Activated naive CD4-positive, alpha-beta T cell treated with anti-CD3 and anti-CD28 coated beads for 36 hours (primary cell): ENCODE measurements at regions of chr13 and their contacts with region 1.

Region 1: DNA sequence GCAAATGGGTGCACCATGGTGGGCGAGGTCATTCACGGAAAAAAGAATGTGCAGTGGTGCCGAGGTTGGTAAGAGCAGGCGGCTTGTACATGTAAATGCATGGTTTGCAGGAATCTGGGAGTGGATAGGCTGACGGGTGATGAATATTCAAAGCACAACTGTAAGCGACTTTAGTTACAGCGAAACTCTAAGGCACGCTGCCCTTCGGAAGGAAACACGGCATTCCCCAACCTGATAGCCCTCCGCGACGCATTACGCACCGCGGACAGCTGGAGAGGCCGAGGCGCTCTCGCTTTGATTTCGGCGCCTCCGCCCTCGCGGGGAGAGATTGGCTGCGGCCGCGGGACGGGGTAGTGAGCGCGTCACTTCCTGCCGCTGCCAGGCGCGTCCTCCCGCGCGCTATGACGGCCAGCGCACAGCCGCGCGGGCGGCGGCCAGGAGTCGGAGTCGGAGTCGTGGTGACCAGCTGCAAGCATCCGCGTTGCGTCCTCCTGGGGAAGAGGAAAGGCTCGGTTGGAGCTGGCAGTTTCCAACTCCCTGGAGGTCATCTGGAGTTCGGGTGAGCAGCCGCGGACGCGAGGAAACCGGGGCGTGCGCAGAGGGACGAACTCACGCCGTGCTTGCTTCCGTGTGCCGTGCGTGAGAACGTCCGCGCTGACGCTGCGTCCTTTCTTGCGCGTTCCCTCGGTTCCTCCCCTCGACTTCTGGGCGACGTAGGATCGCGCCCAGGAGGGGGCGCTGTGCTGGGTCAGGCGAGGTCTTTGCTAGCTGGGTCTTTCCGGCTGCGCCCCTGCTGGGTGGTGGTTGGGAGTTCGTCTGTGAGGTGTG is at the start of gene NUDT15:
- DNase-seq: peak; percentile 96
- H3K4me3 Mint-ChIP-seq: peak within 1 kb of the TSS; percentile 95
- H3K27ac Mint-ChIP-seq: peak within 1 kb of the TSS; percentile 95
- H3K4me1 Mint-ChIP-seq: peaks cover 42% of the 10 kb centered on the region
- H3K27me3 Mint-ChIP-seq: no peaks in the 10 kb centered on the region
- total RNA-seq, gene NUDT15: 28.3 to 29.2 TPM

Region 2: DNA sequence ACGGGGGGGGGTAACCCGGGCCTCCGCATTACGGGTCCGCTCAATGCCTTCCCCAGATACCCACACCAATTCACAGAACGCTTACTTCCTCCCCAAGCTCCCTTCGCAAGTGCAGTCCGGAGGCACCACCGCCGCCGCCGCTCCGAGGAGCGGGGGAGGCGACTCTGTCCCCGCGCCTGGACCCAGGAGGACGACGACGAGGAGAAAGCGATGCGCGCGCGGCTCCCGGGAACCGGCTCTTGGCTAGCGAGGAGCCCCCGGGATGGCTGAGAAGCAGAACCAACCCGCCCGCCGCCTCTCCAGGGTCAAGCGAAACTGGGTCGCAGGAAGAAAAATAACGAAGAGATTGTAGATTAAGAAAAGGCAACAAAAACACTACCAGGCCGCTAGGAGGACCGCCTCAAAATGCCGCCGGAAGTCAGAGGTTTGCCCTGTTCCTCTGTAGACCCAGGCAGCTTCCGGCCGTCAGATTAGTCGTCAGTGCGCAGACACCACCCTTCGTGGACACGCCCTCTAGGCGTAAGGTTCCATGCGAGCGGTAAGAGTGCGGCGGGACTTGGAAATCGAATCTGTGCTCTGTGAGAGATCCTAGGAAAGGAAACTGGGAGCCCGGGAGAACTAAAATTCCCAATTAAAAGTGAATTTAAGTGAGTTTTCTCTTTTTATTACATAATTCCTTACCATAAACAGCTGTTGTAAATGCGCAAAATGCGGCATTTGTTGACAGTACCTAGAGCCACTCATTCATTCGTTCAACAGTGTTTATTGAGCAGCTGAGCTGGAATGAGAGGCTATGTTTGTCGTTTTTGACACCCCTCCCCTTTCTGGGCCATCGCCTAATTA is 1985.0 kb before region 1 on chr13 and contains the start of gene ZC3H13:
- CTCF ChIA-PET with region 1: no interaction called
- intact Hi-C with region 1: loop called (anchors 2 kb)
- DNase-seq: peak; percentile 97
- H3K4me3 Mint-ChIP-seq: peak within 1 kb of the TSS; percentile 81
- H3K27ac Mint-ChIP-seq: peak within 1 kb of the TSS; percentile 94
- H3K4me1 Mint-ChIP-seq: peaks cover 29% of the 10 kb centered on the region
- H3K27me3 Mint-ChIP-seq: peaks cover 4% of the 10 kb centered on the region
- total RNA-seq, gene ZC3H13: 38.2 to 42.2 TPM

Region 3: DNA sequence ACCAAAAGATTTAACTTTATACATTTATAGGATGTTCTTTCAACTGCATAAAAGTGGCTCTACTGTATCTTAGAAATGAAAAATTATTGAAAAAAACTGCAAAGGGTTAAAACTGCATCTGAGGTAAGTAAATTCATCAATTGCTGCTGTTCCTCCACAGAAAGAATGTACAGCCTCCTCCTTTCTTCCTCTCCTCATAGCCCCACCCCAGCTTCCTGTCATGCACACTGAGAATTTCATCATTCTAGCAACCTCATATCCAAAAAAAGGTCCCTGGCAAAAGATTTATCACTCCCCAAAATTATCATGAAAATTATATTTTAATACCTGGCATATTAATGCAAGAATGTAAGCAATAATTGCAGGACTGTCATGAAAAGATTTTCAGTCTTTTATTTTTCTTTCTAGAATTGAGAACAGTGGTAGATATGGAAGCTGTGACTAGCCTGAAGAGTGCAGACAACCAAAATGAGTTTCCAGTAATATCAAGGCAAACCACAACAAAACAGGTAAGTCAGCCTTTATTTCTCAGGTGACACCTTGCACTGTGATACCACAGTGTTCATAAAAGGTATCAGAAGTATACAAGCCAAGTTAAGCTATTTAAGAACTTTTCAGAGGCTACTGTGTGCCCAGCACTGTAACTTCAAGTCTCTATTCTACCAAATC is 147.3 kb before region 1 on chr13:
- CTCF ChIA-PET with region 1: interaction called, 9 read pairs
- intact Hi-C with region 1: loop called (anchors 2 kb)
- DNase-seq: peak; percentile 55
- H3K4me3 Mint-ChIP-seq: peak overlapping the region; percentile 70
- H3K27ac Mint-ChIP-seq: peak overlapping the region; percentile 80
- H3K4me1 Mint-ChIP-seq: peaks cover 15% of the 10 kb centered on the region
- H3K27me3 Mint-ChIP-seq: no peaks in the 10 kb centered on the region

Region 4: DNA sequence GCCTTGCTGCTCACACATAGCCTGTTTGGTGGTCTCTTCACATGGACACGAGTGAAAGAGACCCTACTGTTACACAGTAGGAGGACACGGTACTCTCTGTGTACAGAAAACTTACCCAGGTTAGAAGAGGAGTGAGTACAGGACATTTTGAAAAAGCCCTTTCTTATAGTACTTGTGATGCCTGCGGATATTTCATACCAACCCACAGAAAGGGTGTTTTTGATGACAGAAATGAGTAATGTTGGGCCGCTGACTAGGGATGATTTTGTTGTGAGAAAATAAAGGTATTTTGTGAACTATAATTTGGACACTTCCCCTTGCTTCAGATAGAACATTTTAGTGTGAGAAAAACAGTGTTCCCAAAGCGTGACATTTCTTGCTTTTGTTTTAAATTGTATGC is 18.2 kb after region 1 on chr13:
- CTCF ChIA-PET with region 1: no interaction called
- intact Hi-C with region 1: no loop called
- DNase-seq: no peak
- H3K4me3 Mint-ChIP-seq: no peak overlapping the region
- H3K27ac Mint-ChIP-seq: no peak overlapping the region
- H3K4me1 Mint-ChIP-seq: no peaks in the 10 kb centered on the region
- H3K27me3 Mint-ChIP-seq: no peaks in the 10 kb centered on the region

Region 5: DNA sequence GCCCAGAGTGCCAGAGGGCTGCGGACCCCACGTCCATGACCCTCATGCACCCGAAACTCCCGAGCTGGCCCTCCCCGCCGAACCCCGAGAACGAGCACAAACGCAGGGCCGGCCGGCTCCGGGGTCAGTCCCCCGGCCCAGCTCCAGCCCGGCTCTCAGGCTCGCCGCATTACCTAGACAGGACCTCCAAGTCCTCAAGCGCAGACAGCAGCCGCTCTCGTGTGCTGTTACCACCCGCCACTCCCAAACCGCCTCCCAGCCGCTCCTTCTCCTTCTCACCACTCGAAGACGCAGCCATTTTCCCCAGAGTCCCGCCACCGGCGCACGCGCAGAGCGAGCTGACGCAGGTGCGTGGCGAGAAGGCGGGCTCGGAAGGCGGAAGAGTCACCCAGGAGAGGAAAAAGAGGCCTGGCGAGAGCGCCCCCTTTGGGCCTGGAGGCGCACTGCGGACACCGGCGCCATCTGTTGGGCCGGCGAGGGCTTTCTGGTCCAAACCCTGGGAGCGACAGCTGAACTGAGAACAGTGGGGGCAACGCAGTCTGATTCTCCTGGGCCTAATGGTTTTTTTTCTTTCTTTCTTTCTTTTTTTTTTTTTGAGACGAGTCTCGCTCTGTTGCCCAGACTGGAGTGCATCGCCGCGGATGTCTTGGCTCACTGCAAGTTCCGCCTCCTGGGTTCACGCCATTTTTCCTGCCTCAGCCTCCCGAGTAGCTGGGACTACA is 57.4 kb after region 1 on chr13 and contains the start of gene MED4:
- CTCF ChIA-PET with region 1: interaction called, 23 read pairs
- intact Hi-C with region 1: loop called (anchors 1 kb)
- DNase-seq: peak; percentile 97
- H3K4me3 Mint-ChIP-seq: peak within 1 kb of the TSS; percentile 91
- H3K27ac Mint-ChIP-seq: peak within 1 kb of the TSS; percentile 80
- H3K4me1 Mint-ChIP-seq: peaks cover 33% of the 10 kb centered on the region
- H3K27me3 Mint-ChIP-seq: no peaks in the 10 kb centered on the region
- total RNA-seq, gene MED4: 45.8 to 50.1 TPM

Region 6: GRCh38 chr13:48412881-48413351 is 375.4 kb after region 1 on chr13 and contains the start of gene LPAR6:
- CTCF ChIA-PET with region 1: no interaction called
- intact Hi-C with region 1: loop called (anchors 2 kb)
- DNase-seq: peak; percentile 20
- H3K4me3 Mint-ChIP-seq: peak within 1 kb of the TSS; percentile 84
- H3K27ac Mint-ChIP-seq: peak within 1 kb of the TSS; percentile 92
- H3K4me1 Mint-ChIP-seq: peaks cover 33% of the 10 kb centered on the region
- H3K27me3 Mint-ChIP-seq: no peaks in the 10 kb centered on the region
- total RNA-seq, gene LPAR6: 6.1 to 6.6 TPM

Region 7: GRCh38 chr13:48769107-48769704 is 731.6 kb after region 1 on chr13:
- CTCF ChIA-PET with region 1: no interaction called
- intact Hi-C with region 1: loop called (anchors 2 kb)
- DNase-seq: peak; percentile 93
- H3K4me3 Mint-ChIP-seq: no peak overlapping the region
- H3K27ac Mint-ChIP-seq: no peak overlapping the region
- H3K4me1 Mint-ChIP-seq: peaks cover 15% of the 10 kb centered on the region
- H3K27me3 Mint-ChIP-seq: peaks cover 4% of the 10 kb centered on the region